GM12878 (cell line): ENCODE measurements at regions of chr2 and their contacts with region 1.

Region 1: GRCh38 chr2:8488001-8488738 is 193.7 kb upstream of the ID2 start:
- DNase-seq: peak; percentile 95
- ATAC-seq: peak; percentile 63
- H3K4me3 ChIP-seq: peak overlapping the region; percentile 75
- H3K27ac ChIP-seq: peak overlapping the region; percentile 80
- H3K4me1 ChIP-seq: peaks cover 19% of the 10 kb centered on the region
- H3K27me3 ChIP-seq: no peaks in the 10 kb centered on the region
- CTCF ChIP-seq: no peak
- EP300 ChIP-seq: peak; percentile 78 to 80; a peak in 3 of 4 replicates
- POLR2A ChIP-seq: no peak
- RAD21 ChIP-seq: peak; percentile 1; the same call in 1 of the 2 replicates

Region 2: DNA sequence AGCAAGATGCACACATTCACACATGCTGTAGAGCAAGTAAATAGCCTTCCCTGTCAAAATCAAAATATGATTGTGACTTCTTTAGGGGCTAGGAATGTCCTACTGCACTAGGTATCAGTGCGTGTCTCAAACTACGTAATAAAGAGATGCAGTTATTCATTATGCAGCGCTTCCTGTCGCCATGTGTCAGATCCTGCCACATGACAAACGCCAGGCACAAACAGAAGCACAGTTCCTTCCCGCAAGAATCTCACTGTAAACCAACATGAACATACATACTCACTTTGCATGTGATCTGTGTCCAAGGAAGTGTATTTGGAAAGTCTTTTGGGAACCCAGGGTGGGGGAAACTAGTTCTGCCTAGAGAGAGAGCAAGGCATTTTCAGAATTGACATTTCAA is 971.1 kb before region 1 on chr2:
- CTCF ChIA-PET with region 1: no interaction called
- POLR2A ChIA-PET with region 1: no interaction called
- RAD21 ChIA-PET with region 1: no interaction called
- SMC1A ChIA-PET with region 1: no interaction called
- in situ Hi-C with region 1: no loop called
- intact Hi-C with region 1: loop called (anchors 5 kb)
- DNase-seq: no peak
- ATAC-seq: peak; percentile 68
- H3K4me3 ChIP-seq: no peak overlapping the region
- H3K27ac ChIP-seq: no peak overlapping the region
- H3K4me1 ChIP-seq: peaks cover 17% of the 10 kb centered on the region
- H3K27me3 ChIP-seq: peaks cover 0 to 2% of the 10 kb centered on the region in 2 experiments; a peak in 1 of 4 replicates
- CTCF ChIP-seq: no peak
- EP300 ChIP-seq: no peak; a peak in 2 of 4 replicates
- POLR2A ChIP-seq: no peak
- RAD21 ChIP-seq: no peak

Region 3: DNA sequence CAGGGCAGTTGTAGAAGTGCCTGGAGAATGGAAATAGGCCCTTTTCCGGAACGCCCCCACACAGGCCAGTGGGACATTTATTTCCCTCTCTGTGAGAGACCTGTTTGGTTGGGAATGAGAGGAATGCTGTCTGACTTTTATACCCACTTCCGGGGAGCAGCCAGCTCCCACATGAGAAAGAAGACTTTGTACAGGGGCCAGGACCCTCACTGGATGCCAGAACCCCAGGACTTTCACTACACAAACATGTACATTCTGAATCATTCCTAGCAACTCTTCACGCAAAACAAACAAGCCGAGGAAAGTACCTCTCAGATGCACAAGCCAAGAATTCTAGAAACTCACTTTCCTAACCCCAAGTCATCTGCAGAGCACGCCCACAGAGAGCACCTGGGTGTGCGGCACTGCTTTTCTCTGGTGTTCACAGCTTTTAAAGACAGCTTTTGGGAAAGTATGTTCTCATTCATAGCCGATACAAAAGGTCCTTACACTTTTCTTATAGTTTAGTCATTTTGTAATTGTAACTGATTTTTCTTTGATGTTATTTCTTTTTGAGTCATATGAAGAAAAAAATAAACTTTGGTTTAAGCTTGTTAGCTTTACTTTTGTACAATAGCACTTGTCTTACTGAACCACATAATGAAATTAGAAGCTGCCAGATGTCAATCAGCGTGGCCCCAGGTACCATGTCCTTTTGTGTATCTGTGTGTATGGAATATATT is 662.4 kb before region 1 on chr2:
- CTCF ChIA-PET with region 1: no interaction called
- POLR2A ChIA-PET with region 1: no interaction called
- RAD21 ChIA-PET with region 1: no interaction called
- SMC1A ChIA-PET with region 1: no interaction called
- in situ Hi-C with region 1: no loop called
- intact Hi-C with region 1: loop called (anchors 5 kb)
- DNase-seq: peak; percentile 78
- ATAC-seq: peak; percentile 97
- H3K4me3 ChIP-seq: no peak overlapping the region
- H3K27ac ChIP-seq: peak overlapping the region; percentile 75
- H3K4me1 ChIP-seq: peaks cover 10% of the 10 kb centered on the region
- H3K27me3 ChIP-seq: no peaks in the 10 kb centered on the region
- CTCF ChIP-seq: no peak
- EP300 ChIP-seq: peak; percentile 94 to 98
- POLR2A ChIP-seq: no peak
- RAD21 ChIP-seq: peak; percentile 19; the same call in 1 of the 2 replicates

Region 4: DNA sequence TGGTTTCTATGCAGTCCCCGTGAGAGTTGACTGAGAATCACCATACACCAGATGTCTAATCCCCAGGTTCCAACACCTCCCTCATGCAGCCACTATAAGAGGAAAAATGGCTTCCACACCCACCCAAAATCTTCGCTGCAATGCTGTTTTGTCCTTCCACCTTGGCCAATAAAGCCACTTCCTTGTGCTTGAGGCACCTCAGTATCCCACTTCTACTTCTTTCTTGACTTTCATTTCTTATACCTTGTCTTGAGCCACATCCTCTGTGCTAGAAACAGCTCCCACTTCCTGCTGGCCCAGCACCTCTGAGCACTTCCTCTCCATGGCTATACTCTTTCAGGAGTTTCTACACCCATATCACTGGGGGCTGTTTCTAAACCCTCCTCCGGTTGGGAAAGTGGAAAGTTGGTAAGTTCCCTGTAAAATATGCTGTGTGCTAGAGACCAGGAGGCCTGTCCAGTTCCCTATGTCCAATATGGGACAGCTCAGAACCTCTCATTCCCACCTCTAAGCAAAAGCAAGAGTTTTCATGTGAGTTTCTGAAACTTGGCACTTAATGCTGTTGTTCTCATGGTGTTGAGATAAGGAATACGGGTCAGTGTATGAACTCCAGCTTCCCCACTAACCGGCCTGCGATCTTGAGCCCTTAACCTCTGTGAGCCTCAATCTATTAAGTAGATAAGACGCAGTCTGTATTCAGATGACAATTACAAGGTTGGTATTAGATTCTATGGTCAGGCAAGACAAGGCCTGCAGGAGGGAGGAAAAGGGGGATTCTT is 15.4 kb before region 1 on chr2:
- CTCF ChIA-PET with region 1: interaction called, 10 read pairs
- POLR2A ChIA-PET with region 1: interaction called, 40 read pairs
- RAD21 ChIA-PET with region 1: interaction called, 36 read pairs
- SMC1A ChIA-PET with region 1: interaction called, 22 read pairs
- in situ Hi-C with region 1: no loop called
- intact Hi-C with region 1: loop called (anchors 2 kb)
- DNase-seq: no peak
- ATAC-seq: peak; percentile 20
- H3K4me3 ChIP-seq: no peak overlapping the region
- H3K27ac ChIP-seq: peak overlapping the region; percentile 33
- H3K4me1 ChIP-seq: peaks cover 59% of the 10 kb centered on the region
- H3K27me3 ChIP-seq: no peaks in the 10 kb centered on the region
- CTCF ChIP-seq: no peak
- EP300 ChIP-seq: peak; percentile 10 to 24; a peak in 1 of 4 replicates
- POLR2A ChIP-seq: no peak
- RAD21 ChIP-seq: no peak

Region 5: GRCh38 chr2:8514796-8515758 is 26.9 kb after region 1 on chr2:
- CTCF ChIA-PET with region 1: interaction called, 24 read pairs
- POLR2A ChIA-PET with region 1: interaction called, 73 read pairs
- RAD21 ChIA-PET with region 1: interaction called, 155 read pairs
- SMC1A ChIA-PET with region 1: interaction called, 121 read pairs
- in situ Hi-C with region 1: no loop called
- intact Hi-C with region 1: loop called (anchors 1 kb)
- DNase-seq: peak; percentile 99
- ATAC-seq: peak; percentile 82
- H3K4me3 ChIP-seq: peak overlapping the region; percentile 51; the same call in 1 of the 2 replicates
- H3K27ac ChIP-seq: peak overlapping the region; percentile 93
- H3K4me1 ChIP-seq: peaks cover 46% of the 10 kb centered on the region
- H3K27me3 ChIP-seq: no peaks in the 10 kb centered on the region
- CTCF ChIP-seq: no peak
- EP300 ChIP-seq: peak; percentile 76 to 95; a peak in 3 of 4 replicates
- POLR2A ChIP-seq: no peak
- RAD21 ChIP-seq: peak; percentile 36; the same call in 1 of the 2 replicates

Region 6: GRCh38 chr2:8754106-8754776 is 266.1 kb after region 1 on chr2:
- CTCF ChIA-PET with region 1: no interaction called
- POLR2A ChIA-PET with region 1: no interaction called
- RAD21 ChIA-PET with region 1: no interaction called
- SMC1A ChIA-PET with region 1: interaction called, 3 read pairs
- in situ Hi-C with region 1: no loop called
- intact Hi-C with region 1: loop called (anchors 10 kb)
- DNase-seq: no peak
- ATAC-seq: peak; percentile 72
- H3K4me3 ChIP-seq: no peak overlapping the region
- H3K27ac ChIP-seq: no peak overlapping the region
- H3K4me1 ChIP-seq: peaks cover 18% of the 10 kb centered on the region
- H3K27me3 ChIP-seq: no peaks in the 10 kb centered on the region
- CTCF ChIP-seq: no peak
- EP300 ChIP-seq: no peak
- POLR2A ChIP-seq: no peak
- RAD21 ChIP-seq: no peak